PC-3 (cell line): ENCODE measurements at regions of chr15 and their contacts with region 1.

Region 1: GRCh38 chr15:98671060-98672008 is 23.0 kb downstream of the IGF1R start:
- DNase-seq: no peak
- ATAC-seq: no peak
- H3K4me3 ChIP-seq: no peak overlapping the region
- H3K27ac ChIP-seq: no peak overlapping the region
- H3K4me1 ChIP-seq: peaks cover 11% of the 10 kb centered on the region
- H3K27me3 ChIP-seq: no peaks in the 10 kb centered on the region
- CTCF ChIP-seq: no peak

Region 2: DNA sequence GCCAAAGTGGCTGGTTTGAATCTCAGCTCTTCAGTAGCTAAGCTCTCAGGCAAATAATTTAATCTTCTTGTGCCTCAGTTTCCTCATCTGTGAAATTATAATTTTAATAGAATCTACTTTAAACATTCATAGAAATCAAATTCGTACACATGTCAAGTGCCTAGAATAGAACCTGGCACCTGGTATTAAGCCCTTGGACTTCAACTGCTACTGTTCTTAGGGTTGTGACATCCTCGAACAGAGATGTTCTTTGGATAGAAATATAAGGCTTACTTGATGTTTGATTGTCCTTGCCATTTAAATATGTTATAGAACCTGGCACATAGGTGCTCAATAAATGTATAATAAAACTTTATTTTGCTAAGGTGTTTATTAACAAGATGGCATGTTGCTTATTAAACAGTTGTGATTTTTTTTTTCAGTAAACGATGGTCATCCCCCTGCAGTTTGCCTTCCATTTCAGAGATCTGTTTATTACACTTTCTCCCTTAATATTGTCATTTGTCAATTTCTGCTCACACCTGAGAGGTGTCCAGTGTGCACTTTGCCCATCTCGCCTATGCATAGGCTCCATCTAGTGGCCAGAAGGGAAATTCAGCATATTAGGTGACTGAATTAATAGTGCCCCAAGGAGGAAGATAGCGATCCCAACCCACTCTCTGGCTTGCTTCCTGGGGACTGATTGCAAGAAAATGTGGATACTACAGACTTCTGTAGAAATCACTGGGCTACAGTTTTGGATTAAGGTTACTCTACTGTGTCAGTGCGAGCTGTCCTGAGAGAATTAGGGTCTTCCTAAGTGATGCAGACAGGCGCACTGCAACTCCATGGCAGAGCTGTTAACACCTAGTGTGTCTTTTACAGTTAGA is 12.3 kb before region 1 on chr15:
- CTCF ChIA-PET with region 1: no interaction called
- POLR2A ChIA-PET with region 1: no interaction called
- intact Hi-C with region 1: no loop called
- DNase-seq: peak; percentile 74
- ATAC-seq: peak; percentile 77
- H3K4me3 ChIP-seq: no peak overlapping the region
- H3K27ac ChIP-seq: no peak overlapping the region
- H3K4me1 ChIP-seq: peaks cover 8% of the 10 kb centered on the region; the same call in 1 of the 2 replicates
- H3K27me3 ChIP-seq: peaks cover 7% of the 10 kb centered on the region; the same call in 1 of the 2 replicates
- CTCF ChIP-seq: peak; percentile 89

Region 3: GRCh38 chr15:98684436-98684835 is 13.1 kb after region 1 on chr15:
- CTCF ChIA-PET with region 1: no interaction called
- POLR2A ChIA-PET with region 1: interaction called, 16 read pairs
- intact Hi-C with region 1: no loop called
- DNase-seq: peak; percentile 63
- ATAC-seq: peak; percentile 75
- H3K4me3 ChIP-seq: no peak overlapping the region
- H3K27ac ChIP-seq: no peak overlapping the region
- H3K4me1 ChIP-seq: peaks cover 11% of the 10 kb centered on the region
- H3K27me3 ChIP-seq: no peaks in the 10 kb centered on the region
- CTCF ChIP-seq: no peak

Region 4: GRCh38 chr15:98727115-98728085 is 56.1 kb after region 1 on chr15:
- CTCF ChIA-PET with region 1: no interaction called
- POLR2A ChIA-PET with region 1: no interaction called
- intact Hi-C with region 1: no loop called
- DNase-seq: peak; percentile 95
- ATAC-seq: peak; percentile 98
- H3K4me3 ChIP-seq: peak overlapping the region; percentile 39
- H3K27ac ChIP-seq: peak overlapping the region; percentile 89
- H3K4me1 ChIP-seq: peaks cover 35% of the 10 kb centered on the region
- H3K27me3 ChIP-seq: no peaks in the 10 kb centered on the region
- CTCF ChIP-seq: no peak

Region 5: GRCh38 chr15:98843844-98844243 is 172.5 kb after region 1 on chr15:
- CTCF ChIA-PET with region 1: interaction called, 13 read pairs
- POLR2A ChIA-PET with region 1: no interaction called
- intact Hi-C with region 1: no loop called
- DNase-seq: no peak
- ATAC-seq: no peak
- H3K4me3 ChIP-seq: no peak overlapping the region
- H3K27ac ChIP-seq: no peak overlapping the region
- H3K4me1 ChIP-seq: 0 out of 2 replicates have a peak, but pooled peaks cover 3% of the 10 kb centered on the region
- H3K27me3 ChIP-seq: no peaks in the 10 kb centered on the region
- CTCF ChIP-seq: no peak

Region 6: DNA sequence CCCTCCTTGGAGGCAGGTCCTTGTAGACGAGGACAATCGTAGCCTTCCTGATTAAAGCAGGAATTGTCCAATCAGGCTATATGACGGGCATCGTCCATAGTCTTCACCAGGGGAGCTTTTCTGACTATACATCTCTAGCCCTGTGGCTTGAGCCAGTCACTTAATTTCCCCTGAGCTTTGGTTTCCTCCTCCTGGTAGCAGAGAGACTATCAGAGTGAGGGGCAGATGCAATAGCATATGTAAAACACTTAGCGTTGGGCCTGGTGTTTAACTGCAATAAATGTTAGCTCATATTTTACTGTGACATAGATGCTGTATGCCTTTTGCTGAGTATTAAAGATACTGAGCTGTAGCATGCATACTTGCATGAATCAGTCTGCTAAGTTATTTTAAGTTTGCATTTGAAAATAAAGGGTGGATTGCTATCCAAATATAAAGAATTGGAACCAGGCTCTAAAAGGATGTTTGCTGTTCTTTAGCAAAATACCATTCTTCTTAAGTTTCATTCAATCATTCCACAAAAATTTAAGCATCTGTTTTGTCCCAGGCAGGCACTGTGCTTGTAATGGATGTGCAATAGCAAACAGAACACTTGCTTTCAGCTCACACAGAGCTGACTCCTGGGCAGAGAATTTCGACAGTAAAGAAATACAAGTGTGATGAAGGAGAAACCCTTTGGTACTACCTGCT is 185.0 kb after region 1 on chr15:
- CTCF ChIA-PET with region 1: no interaction called
- POLR2A ChIA-PET with region 1: no interaction called
- intact Hi-C with region 1: no loop called
- DNase-seq: peak; percentile 74
- ATAC-seq: peak; percentile 29
- H3K4me3 ChIP-seq: 0 out of 2 replicates have a peak overlapping the region, but pooled peaks have one; percentile 11
- H3K27ac ChIP-seq: peak overlapping the region; percentile 60
- H3K4me1 ChIP-seq: peaks cover 74% of the 10 kb centered on the region
- H3K27me3 ChIP-seq: no peaks in the 10 kb centered on the region
- CTCF ChIP-seq: no peak